ENCODE measurements at regions of chr18 and their contacts with region 1.

Region 1: DNA sequence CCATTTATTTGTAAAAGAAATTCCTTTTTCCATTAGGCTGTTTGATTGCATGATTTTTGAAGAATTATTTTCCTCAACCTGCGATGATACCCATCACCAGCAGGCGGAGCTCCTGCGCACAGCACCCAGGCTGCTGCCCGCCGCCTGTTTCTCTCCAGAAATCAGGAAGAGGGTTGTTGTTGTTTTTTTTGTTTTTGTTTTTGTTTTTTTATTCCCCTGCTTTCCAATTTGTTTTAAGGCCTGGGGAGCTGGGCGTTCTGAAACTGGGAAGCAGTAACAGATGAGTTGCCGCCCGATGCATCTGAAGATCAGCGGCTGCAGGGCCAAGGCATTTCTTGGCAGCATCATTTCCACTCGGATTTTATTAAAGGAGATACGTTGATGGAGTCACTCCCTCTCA is 132.1 kb downstream of the MBP start:
- DNase-seq: peak; percentile 66
- H3K4me3 Mint-ChIP-seq: no peak overlapping the region
- H3K27ac Mint-ChIP-seq: no peak overlapping the region
- H3K4me1 Mint-ChIP-seq: peaks cover 42% of the 10 kb centered on the region
- H3K27me3 Mint-ChIP-seq: peaks cover 19% of the 10 kb centered on the region

Region 2: DNA sequence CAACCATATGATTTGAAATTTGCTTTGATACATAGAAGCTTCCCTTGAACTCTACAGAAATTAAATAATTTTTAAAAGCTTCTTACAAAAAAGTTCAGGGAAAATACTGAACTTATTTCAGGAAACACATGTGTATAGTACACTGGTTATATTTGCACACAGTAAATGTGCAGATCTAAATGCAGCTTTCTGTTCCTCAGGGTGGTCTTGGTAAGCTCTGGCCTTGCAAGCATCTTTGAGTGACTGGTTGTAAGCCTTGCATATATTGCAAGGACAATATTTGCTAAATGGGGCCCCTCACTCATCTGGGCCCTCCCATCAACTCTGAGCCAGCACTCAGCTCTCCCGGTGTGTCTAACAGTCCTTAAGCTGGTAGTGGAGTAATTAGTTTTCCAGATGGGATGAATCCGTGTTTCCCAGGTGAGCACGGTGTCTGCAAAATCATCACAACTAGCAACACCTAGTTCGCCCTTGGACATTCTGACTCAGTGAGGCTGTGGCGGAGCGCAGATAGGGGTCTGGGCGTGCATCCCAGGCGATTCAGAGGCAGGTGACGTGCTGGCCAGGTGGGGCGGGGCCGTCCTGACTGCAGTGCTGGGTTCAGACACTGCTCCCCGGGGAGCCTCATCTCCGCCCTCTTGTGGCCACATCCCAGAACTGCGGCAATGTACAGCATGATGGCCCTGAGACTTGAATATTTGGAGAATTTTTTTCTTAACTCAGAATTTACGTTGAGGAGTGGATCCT is 17.5 kb before region 1 on chr18:
- CTCF ChIA-PET with region 1: interaction called, 28 read pairs
- DNase-seq: peak; percentile 94
- H3K4me3 Mint-ChIP-seq: no peak overlapping the region
- H3K27ac Mint-ChIP-seq: no peak overlapping the region
- H3K4me1 Mint-ChIP-seq: peaks cover 6% of the 10 kb centered on the region
- H3K27me3 Mint-ChIP-seq: peaks cover 2% of the 10 kb centered on the region

Region 3: GRCh38 chr18:77013811-77014521 is 13.4 kb after region 1 on chr18:
- CTCF ChIA-PET with region 1: interaction called, 16 read pairs
- DNase-seq: no peak
- H3K4me3 Mint-ChIP-seq: no peak overlapping the region
- H3K27ac Mint-ChIP-seq: no peak overlapping the region
- H3K4me1 Mint-ChIP-seq: peaks cover 5% of the 10 kb centered on the region
- H3K27me3 Mint-ChIP-seq: no peaks in the 10 kb centered on the region

Region 4: GRCh38 chr18:77054606-77055428 is 54.3 kb after region 1 on chr18:
- CTCF ChIA-PET with region 1: interaction called, 47 read pairs
- DNase-seq: peak; percentile 90
- H3K4me3 Mint-ChIP-seq: peak overlapping the region; percentile 82
- H3K27ac Mint-ChIP-seq: peak overlapping the region; percentile 97
- H3K4me1 Mint-ChIP-seq: peaks cover 73% of the 10 kb centered on the region
- H3K27me3 Mint-ChIP-seq: no peaks in the 10 kb centered on the region

Region 5: GRCh38 chr18:77061946-77062517 is 61.5 kb after region 1 on chr18:
- CTCF ChIA-PET with region 1: interaction called, 47 read pairs
- DNase-seq: peak; percentile 59
- H3K4me3 Mint-ChIP-seq: peak overlapping the region; percentile 55
- H3K27ac Mint-ChIP-seq: peak overlapping the region; percentile 100
- H3K4me1 Mint-ChIP-seq: peaks cover 89% of the 10 kb centered on the region
- H3K27me3 Mint-ChIP-seq: no peaks in the 10 kb centered on the region

Region 6: GRCh38 chr18:77207540-77207939 is 207.0 kb after region 1 on chr18:
- CTCF ChIA-PET with region 1: interaction called, 48 read pairs
- DNase-seq: peak; percentile 54
- H3K4me3 Mint-ChIP-seq: no peak overlapping the region
- H3K27ac Mint-ChIP-seq: no peak overlapping the region
- H3K4me1 Mint-ChIP-seq: peaks cover 50% of the 10 kb centered on the region
- H3K27me3 Mint-ChIP-seq: peaks cover 23% of the 10 kb centered on the region

Measured in activated naive CD4-positive, alpha-beta T cell treated with anti-CD3 and anti-CD28 coated beads, Interleukin-2, amount 10 ng/mL, durations not matched to agents 7 days and 5 days (primary cell).